ENCODE measurements at regions of chr14 and their contacts with region 1.

Region 1: GRCh38 chr14:59275653-59276052 is 87.2 kb downstream of the DAAM1 start:
- DNase-seq: peak; percentile 66
- ATAC-seq: peak; percentile 75
- H3K4me3 ChIP-seq: no peak overlapping the region
- H3K27ac ChIP-seq: no peak overlapping the region
- H3K4me1 ChIP-seq: peaks cover 34% of the 10 kb centered on the region
- H3K27me3 ChIP-seq: no peaks in the 10 kb centered on the region
- CTCF ChIP-seq: no peak
- EP300 ChIP-seq: no peak
- POLR2A ChIP-seq: no peak
- RAD21 ChIP-seq: no peak

Region 2: DNA sequence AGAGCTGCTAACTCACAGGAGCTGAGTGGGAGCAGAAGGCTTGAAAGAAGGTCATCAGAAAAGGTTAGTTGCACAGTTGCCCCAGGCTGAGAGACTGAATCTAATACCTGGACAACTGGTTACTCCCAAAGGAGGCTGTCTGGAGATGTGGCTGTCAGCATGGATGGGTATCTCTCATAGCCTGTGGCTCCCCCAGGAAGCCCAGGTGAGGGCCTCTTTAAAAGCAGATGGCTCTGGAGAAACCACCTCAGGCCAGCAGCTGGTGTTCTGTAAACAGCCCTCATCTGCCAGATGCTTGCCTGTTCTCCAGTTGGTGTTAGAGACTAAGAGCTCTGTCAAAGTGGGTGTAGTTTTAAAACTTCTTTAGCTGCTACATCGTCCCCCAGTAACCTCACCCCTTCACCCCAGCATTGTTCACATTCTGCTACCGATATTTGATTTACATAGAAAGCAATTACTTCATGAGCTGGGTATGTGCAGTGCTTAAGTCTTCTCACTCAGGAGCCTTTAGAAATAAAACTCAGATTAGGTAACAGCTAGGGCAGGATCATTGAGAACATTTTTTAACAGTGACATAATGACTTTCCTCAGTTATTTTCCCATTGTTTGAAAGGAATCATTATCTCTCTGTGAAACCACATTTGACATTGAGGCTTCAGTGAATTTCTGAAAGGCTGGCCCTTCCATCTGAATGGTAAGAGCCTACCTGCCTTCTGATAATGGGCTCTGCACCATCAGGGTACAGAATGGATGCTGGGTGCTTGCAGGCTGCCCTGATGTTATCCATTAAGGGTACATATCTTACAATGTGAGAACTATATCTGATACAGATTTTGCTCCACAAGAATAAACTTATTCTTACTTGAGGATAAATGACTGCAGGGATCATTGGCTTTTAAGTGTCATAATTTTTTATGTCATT is 611.9 kb before region 1 on chr14:
- CTCF ChIA-PET with region 1: no interaction called
- POLR2A ChIA-PET with region 1: no interaction called
- in situ Hi-C with region 1: no loop called
- intact Hi-C with region 1: no loop called
- DNase-seq: no peak
- ATAC-seq: no peak
- H3K4me3 ChIP-seq: no peak overlapping the region
- H3K27ac ChIP-seq: no peak overlapping the region
- H3K4me1 ChIP-seq: no peaks in the 10 kb centered on the region
- H3K27me3 ChIP-seq: no peaks in the 10 kb centered on the region
- CTCF ChIP-seq: no peak
- EP300 ChIP-seq: no peak
- POLR2A ChIP-seq: no peak
- RAD21 ChIP-seq: no peak

Region 3: GRCh38 chr14:59262717-59263454 is 12.8 kb before region 1 on chr14:
- CTCF ChIA-PET with region 1: no interaction called
- POLR2A ChIA-PET with region 1: interaction called, 8 read pairs
- in situ Hi-C with region 1: no loop called
- intact Hi-C with region 1: loop called (anchors 2 kb)
- DNase-seq: peak; percentile 95
- ATAC-seq: peak; percentile 100
- H3K4me3 ChIP-seq: peak overlapping the region in 2 of 3 experiments; percentile 28 to 38; a peak in 2 of 6 replicates
- H3K27ac ChIP-seq: peak overlapping the region; percentile 84
- H3K4me1 ChIP-seq: peaks cover 47% of the 10 kb centered on the region
- H3K27me3 ChIP-seq: no peaks in the 10 kb centered on the region
- CTCF ChIP-seq: peak; percentile 68
- EP300 ChIP-seq: peak in 1 of 2 experiments; percentile 83; a peak in 2 of 4 replicates
- POLR2A ChIP-seq: no peak
- RAD21 ChIP-seq: peak; percentile 60